Caco-2 (cell line): ENCODE measurements at regions of chr19 and their contacts with region 1.

Region 1: DNA sequence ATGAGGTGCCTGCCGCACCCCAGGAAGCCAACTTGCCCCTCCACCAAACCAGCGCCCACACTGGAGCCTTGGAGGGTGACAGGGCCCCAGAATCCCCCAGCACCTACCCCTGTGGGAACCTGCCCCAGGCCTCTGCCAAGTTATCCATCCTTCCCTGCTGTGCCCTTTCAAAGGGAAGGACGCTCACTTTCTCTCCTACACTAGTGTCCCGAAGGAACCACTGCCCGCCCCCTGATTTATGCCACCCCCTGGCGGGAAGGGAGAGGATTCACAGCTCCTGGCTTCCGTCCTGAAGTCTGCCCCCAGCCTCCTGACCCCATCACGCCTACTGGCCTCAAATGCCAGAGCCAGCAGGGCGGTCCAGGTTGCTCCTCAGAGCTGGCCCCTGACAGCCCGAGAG is 1.4 kb downstream of the EVI5L start:
- DNase-seq: peak in 1 of 2 experiments; percentile 42
- H3K4me3 ChIP-seq: no peak overlapping the region
- H3K4me3 Mint-ChIP-seq: peak overlapping the region; percentile 74
- H3K27ac Mint-ChIP-seq: no peak overlapping the region
- H3K4me1 ChIP-seq: no peaks in the 10 kb centered on the region; the same call in 1 of the 2 replicates
- H3K4me1 Mint-ChIP-seq: peaks cover 7% of the 10 kb centered on the region
- H3K27me3 ChIP-seq: no peaks in the 10 kb centered on the region
- H3K27me3 Mint-ChIP-seq: peaks cover 7% of the 10 kb centered on the region
- CTCF ChIP-seq: peak; percentile 22 to 24

Region 2: GRCh38 chr19:7783991-7784421 is 47.4 kb before region 1 on chr19:
- CTCF ChIA-PET with region 1: interaction called, 10 read pairs
- POLR2A ChIA-PET with region 1: no interaction called
- intact Hi-C with region 1: no loop called
- DNase-seq: peak; percentile 89 to 90
- H3K4me3 ChIP-seq: no peak overlapping the region
- H3K4me3 Mint-ChIP-seq: peak overlapping the region; percentile 50
- H3K27ac Mint-ChIP-seq: peak overlapping the region; percentile 79
- H3K4me1 ChIP-seq: peaks cover 13% of the 10 kb centered on the region
- H3K4me1 Mint-ChIP-seq: peaks cover 30% of the 10 kb centered on the region
- H3K27me3 ChIP-seq: no peaks in the 10 kb centered on the region
- H3K27me3 Mint-ChIP-seq: no peaks in the 10 kb centered on the region
- CTCF ChIP-seq: no peak